GM12878 (cell line): ENCODE measurements at regions of chr5 and their contacts with region 1.

Region 1: GRCh38 chr5:177497292-177498033 is at the start of gene PDLIM7:
- DNase-seq: peak; percentile 77
- ATAC-seq: peak; percentile 81
- H3K4me3 ChIP-seq: peak within 1 kb of the TSS; percentile 86
- H3K27ac ChIP-seq: peak within 1 kb of the TSS; percentile 74
- H3K4me1 ChIP-seq: peaks cover 42% of the 10 kb centered on the region
- H3K27me3 ChIP-seq: no peaks in the 10 kb centered on the region; a peak in 1 of 4 replicates
- CTCF ChIP-seq: 0 out of 6 replicates have a peak, but pooled peaks of 1 of the 3 experiments have one; percentile 0
- EP300 ChIP-seq: no peak
- POLR2A ChIP-seq: peak; percentile 98
- RAD21 ChIP-seq: no peak
- polyA plus RNA-seq, gene PDLIM7: 0.82 to 2.3 TPM

Region 2: GRCh38 chr5:177311723-177312648 is 185.5 kb before region 1 on chr5 and contains the start of gene MXD3:
- CTCF ChIA-PET with region 1: interaction called, 12 read pairs
- POLR2A ChIA-PET with region 1: interaction called, 4 read pairs
- RAD21 ChIA-PET with region 1: interaction called, 4 read pairs
- SMC1A ChIA-PET with region 1: interaction called, 3 read pairs
- in situ Hi-C with region 1: no loop called
- intact Hi-C with region 1: loop called (anchors 5 kb)
- DNase-seq: peak; percentile 76
- ATAC-seq: peak; percentile 89
- H3K4me3 ChIP-seq: peak within 1 kb of the TSS; percentile 93
- H3K27ac ChIP-seq: peak within 1 kb of the TSS; percentile 92
- H3K4me1 ChIP-seq: peaks cover 17% of the 10 kb centered on the region
- H3K27me3 ChIP-seq: no peaks in the 10 kb centered on the region
- CTCF ChIP-seq: no peak
- EP300 ChIP-seq: no peak
- POLR2A ChIP-seq: peak; percentile 78
- RAD21 ChIP-seq: no peak
- polyA plus RNA-seq, gene MXD3: 0.24 to 0.93 TPM

Region 3: DNA sequence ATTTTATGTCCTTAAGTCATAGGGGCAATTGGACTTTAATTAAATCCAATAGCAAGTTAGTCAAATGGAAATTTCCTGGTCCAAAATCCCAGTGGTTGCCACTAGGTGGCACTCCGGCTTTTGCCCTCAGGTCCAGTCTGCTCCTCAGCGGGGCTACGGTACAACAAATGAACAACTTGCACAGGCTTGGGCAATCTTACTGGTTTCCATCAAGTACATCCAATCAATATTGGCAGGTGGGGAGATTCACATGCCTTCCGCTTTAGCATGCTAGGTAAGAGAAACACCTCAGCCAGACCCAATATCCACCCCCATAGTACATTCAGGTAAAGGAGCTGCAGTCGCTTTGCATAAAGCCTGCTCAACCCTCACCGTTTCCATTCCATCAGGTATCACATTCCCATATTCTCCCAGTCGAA is 179.5 kb before region 1 on chr5:
- CTCF ChIA-PET with region 1: interaction called, 12 read pairs
- POLR2A ChIA-PET with region 1: no interaction called
- RAD21 ChIA-PET with region 1: no interaction called
- SMC1A ChIA-PET with region 1: interaction called, 5 read pairs
- in situ Hi-C with region 1: no loop called
- intact Hi-C with region 1: loop called (anchors 5 kb)
- DNase-seq: no peak
- ATAC-seq: peak; percentile 80
- H3K4me3 ChIP-seq: no peak overlapping the region
- H3K27ac ChIP-seq: no peak overlapping the region
- H3K4me1 ChIP-seq: peaks cover 11% of the 10 kb centered on the region
- H3K27me3 ChIP-seq: no peaks in the 10 kb centered on the region
- CTCF ChIP-seq: peak; percentile 85 to 97 (median 93)
- EP300 ChIP-seq: no peak
- POLR2A ChIP-seq: no peak
- RAD21 ChIP-seq: peak; percentile 90

Region 4: GRCh38 chr5:177446200-177447065 is 51.0 kb before region 1 on chr5 and contains the start of gene PRR7:
- CTCF ChIA-PET with region 1: interaction called, 14 read pairs
- POLR2A ChIA-PET with region 1: interaction called, 4 read pairs
- RAD21 ChIA-PET with region 1: interaction called, 8 read pairs
- SMC1A ChIA-PET with region 1: interaction called, 10 read pairs
- in situ Hi-C with region 1: no loop called
- intact Hi-C with region 1: no loop called
- DNase-seq: no peak
- ATAC-seq: peak; percentile 55
- H3K4me3 ChIP-seq: peak within 1 kb of the TSS; percentile 78
- H3K27ac ChIP-seq: peak within 1 kb of the TSS; percentile 79
- H3K4me1 ChIP-seq: peaks cover 32% of the 10 kb centered on the region
- H3K27me3 ChIP-seq: no peaks in the 10 kb centered on the region
- CTCF ChIP-seq: peak in 1 of 3 experiments; percentile 26; a peak in 1 of 6 replicates
- EP300 ChIP-seq: 0 out of 4 replicates have a peak, but pooled peaks of 1 of the 2 experiments have one; percentile 15
- POLR2A ChIP-seq: no peak
- RAD21 ChIP-seq: no peak
- polyA plus RNA-seq, gene PRR7: not detected

Region 5: GRCh38 chr5:177473461-177474001 is 23.9 kb before region 1 on chr5 and contains the start of gene DBN1:
- CTCF ChIA-PET with region 1: interaction called, 13 read pairs
- POLR2A ChIA-PET with region 1: interaction called, 6 read pairs
- RAD21 ChIA-PET with region 1: interaction called, 7 read pairs
- SMC1A ChIA-PET with region 1: interaction called, 5 read pairs
- in situ Hi-C with region 1: no loop called
- intact Hi-C with region 1: no loop called
- DNase-seq: no peak
- ATAC-seq: peak; percentile 71
- H3K4me3 ChIP-seq: peak within 1 kb of the TSS; percentile 46
- H3K27ac ChIP-seq: peak within 1 kb of the TSS; percentile 2; the same call in 1 of the 2 replicates
- H3K4me1 ChIP-seq: peaks cover 12% of the 10 kb centered on the region
- H3K27me3 ChIP-seq: no peaks in the 10 kb centered on the region
- CTCF ChIP-seq: no peak
- EP300 ChIP-seq: no peak
- POLR2A ChIP-seq: peak; percentile 60; the same call in 1 of the 2 replicates
- RAD21 ChIP-seq: no peak
- polyA plus RNA-seq, gene DBN1: 0.18 to 0.62 TPM

Region 6: DNA sequence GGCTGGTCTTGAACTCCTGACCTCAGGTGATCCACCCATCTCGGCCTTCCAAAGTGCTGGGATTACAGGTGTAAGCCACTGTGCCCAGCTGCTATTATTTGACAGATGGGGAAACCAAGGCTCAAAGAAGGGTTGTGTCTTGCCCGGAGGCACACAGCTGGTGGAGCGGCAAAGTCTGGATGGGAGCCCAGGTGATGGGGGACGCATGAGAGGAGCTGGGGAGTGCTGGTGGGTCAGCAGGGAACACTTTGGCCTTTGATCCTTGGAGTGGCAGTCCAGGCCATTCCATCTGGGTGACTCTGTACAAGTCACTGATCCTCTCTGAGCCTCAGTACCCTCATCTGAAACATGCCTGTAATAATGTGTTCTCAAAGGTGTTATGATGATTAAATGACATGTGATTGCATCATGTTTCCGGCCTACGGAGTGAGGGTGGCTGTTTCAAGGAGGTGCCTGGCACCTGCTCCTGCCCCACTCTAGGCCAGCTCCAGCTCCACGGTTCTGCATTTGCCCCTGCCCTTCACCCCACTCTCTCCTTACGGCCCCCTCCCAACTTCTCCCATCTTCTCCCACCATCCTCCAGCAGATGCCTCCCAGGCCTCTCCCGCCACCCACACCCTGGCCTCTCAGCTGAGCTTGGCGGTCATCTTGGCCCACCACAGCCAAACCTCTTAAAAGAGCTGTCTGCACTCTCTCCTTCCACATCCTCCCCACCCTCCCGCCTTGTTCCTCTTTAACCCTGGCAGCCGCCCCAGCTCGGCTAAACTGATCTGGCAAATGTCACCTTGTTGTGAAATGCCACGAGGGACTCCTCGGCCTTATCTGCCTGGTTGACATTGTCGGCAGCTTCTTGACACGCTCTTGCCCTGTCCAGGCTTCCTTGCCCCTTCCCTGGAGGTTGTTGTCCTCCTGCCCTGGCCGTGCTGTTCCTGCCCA is 18.5 kb before region 1 on chr5:
- CTCF ChIA-PET with region 1: interaction called, 13 read pairs
- POLR2A ChIA-PET with region 1: interaction called, 6 read pairs
- RAD21 ChIA-PET with region 1: interaction called, 4 read pairs
- SMC1A ChIA-PET with region 1: interaction called, 5 read pairs
- in situ Hi-C with region 1: no loop called
- intact Hi-C with region 1: no loop called
- DNase-seq: no peak
- ATAC-seq: peak; percentile 56
- H3K4me3 ChIP-seq: no peak overlapping the region
- H3K27ac ChIP-seq: no peak overlapping the region
- H3K4me1 ChIP-seq: peaks cover 21% of the 10 kb centered on the region
- H3K27me3 ChIP-seq: no peaks in the 10 kb centered on the region
- CTCF ChIP-seq: no peak
- EP300 ChIP-seq: no peak
- POLR2A ChIP-seq: 0 out of 2 replicates have a peak, but pooled peaks have one; percentile 11
- RAD21 ChIP-seq: no peak

Region 7: GRCh38 chr5:177509381-177509951 is 12.0 kb after region 1 on chr5 and contains the start of gene DOK3:
- CTCF ChIA-PET with region 1: interaction called, 36 read pairs
- POLR2A ChIA-PET with region 1: interaction called, 19 read pairs
- RAD21 ChIA-PET with region 1: interaction called, 17 read pairs
- SMC1A ChIA-PET with region 1: interaction called, 10 read pairs
- in situ Hi-C with region 1: no loop called
- intact Hi-C with region 1: no loop called
- DNase-seq: no peak
- ATAC-seq: peak; percentile 63
- H3K4me3 ChIP-seq: peak within 1 kb of the TSS; percentile 87
- H3K27ac ChIP-seq: peak within 1 kb of the TSS; percentile 87
- H3K4me1 ChIP-seq: peaks cover 37% of the 10 kb centered on the region
- H3K27me3 ChIP-seq: no peaks in the 10 kb centered on the region
- CTCF ChIP-seq: no peak
- EP300 ChIP-seq: no peak
- POLR2A ChIP-seq: no peak
- RAD21 ChIP-seq: no peak
- polyA plus RNA-seq, gene DOK3: 6.6 to 8.0 TPM